B cell (primary cell): ENCODE measurements at regions of chr6 and their contacts with region 1.

Region 1: DNA sequence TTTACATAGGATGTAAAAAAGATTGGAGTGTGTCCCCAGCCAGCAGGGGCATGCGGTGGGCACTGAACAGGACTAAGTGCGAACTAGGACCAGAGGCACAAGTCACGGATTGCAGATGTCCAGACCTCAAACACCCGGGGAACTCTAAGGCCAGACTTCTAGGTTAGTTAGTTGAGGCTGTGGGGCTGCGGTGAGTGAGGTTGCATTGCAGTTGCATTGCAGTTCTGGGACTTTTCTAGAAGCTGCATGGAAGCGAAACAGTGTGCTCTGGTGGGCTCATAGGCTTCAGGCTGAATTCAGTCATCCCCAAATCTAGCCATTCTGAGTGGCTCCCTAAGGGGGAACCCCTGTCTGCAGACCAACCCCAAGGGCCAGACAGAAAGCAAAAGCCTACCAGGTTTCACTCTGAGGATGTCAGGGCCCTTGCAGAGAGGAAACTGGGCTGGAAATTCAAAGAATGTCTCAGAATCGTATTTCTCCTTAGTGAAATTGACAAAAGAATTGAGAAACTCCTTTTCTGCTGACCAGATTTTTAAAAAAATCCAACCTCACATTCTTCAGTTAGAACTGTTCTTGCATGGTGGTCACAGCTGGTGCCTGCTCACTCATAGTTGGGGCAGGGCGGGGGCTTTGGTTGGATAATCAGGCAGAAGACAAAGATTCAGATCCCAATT is 182.8 kb downstream of the ZDHHC14 start:
- DNase-seq: peak; percentile 68
- ATAC-seq: peak; percentile 31
- H3K4me3 ChIP-seq: no peak overlapping the region
- H3K4me3 Mint-ChIP-seq: peak overlapping the region; percentile 56
- H3K27ac ChIP-seq: peak overlapping the region; percentile 11 to 45
- H3K27ac Mint-ChIP-seq: peak overlapping the region; percentile 90
- H3K4me1 ChIP-seq: peaks cover 80 to 84% of the 10 kb centered on the region in 2 donors
- H3K4me1 Mint-ChIP-seq: peaks cover 72% of the 10 kb centered on the region
- H3K27me3 ChIP-seq: no peaks in the 10 kb centered on the region
- H3K27me3 Mint-ChIP-seq: no peaks in the 10 kb centered on the region
- CTCF ChIP-seq: no peak

Region 2: GRCh38 chr6:157269261-157269794 is 294.4 kb before region 1 on chr6:
- CTCF ChIA-PET with region 1: no interaction called
- POLR2A ChIA-PET with region 1: no interaction called
- intact Hi-C with region 1: no loop called
- DNase-seq: no peak
- ATAC-seq: no peak
- H3K4me3 ChIP-seq: no peak overlapping the region
- H3K4me3 Mint-ChIP-seq: no peak overlapping the region
- H3K27ac ChIP-seq: no peak overlapping the region
- H3K27ac Mint-ChIP-seq: no peak overlapping the region
- H3K4me1 ChIP-seq: peaks cover 6 to 12% of the 10 kb centered on the region in 2 donors
- H3K4me1 Mint-ChIP-seq: peaks cover 14% of the 10 kb centered on the region
- H3K27me3 ChIP-seq: no peaks in the 10 kb centered on the region
- H3K27me3 Mint-ChIP-seq: peaks cover 4% of the 10 kb centered on the region
- CTCF ChIP-seq: no peak

Region 3: DNA sequence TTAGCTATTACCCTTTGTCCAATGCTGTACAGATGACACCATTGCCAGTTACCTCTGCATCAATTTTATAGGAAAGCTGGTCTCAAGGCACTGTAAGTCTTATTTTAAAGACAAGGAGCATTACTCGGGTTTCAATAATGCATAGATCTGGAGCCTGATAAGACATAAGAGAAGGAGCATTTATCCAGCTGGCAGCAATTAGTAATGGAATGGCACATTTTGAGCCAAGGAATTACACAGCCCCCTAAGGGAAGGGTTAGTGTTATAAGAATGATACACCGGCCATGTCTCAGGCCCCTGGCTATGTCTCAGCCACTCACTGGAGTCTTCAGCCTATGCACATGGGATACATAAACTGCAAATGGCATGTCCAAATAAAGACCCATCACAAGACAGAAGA is 217.4 kb before region 1 on chr6:
- CTCF ChIA-PET with region 1: no interaction called
- POLR2A ChIA-PET with region 1: no interaction called
- intact Hi-C with region 1: no loop called
- DNase-seq: no peak
- ATAC-seq: no peak
- H3K4me3 ChIP-seq: no peak overlapping the region
- H3K4me3 Mint-ChIP-seq: no peak overlapping the region
- H3K27ac ChIP-seq: no peak overlapping the region
- H3K27ac Mint-ChIP-seq: no peak overlapping the region
- H3K4me1 ChIP-seq: no peaks in the 10 kb centered on the region
- H3K4me1 Mint-ChIP-seq: no peaks in the 10 kb centered on the region
- H3K27me3 ChIP-seq: peaks cover 0 to 33% (median 16%) of the 10 kb centered on the region in 4 experiments
- H3K27me3 Mint-ChIP-seq: peaks cover 57% of the 10 kb centered on the region
- CTCF ChIP-seq: no peak

Region 4: GRCh38 chr6:157368359-157369049 is 195.2 kb before region 1 on chr6:
- CTCF ChIA-PET with region 1: interaction called, 3 read pairs
- POLR2A ChIA-PET with region 1: interaction called, 5 read pairs
- intact Hi-C with region 1: loop called (anchors 1 kb)
- DNase-seq: peak; percentile 19
- ATAC-seq: peak; percentile 29
- H3K4me3 ChIP-seq: no peak overlapping the region
- H3K4me3 Mint-ChIP-seq: peak overlapping the region; percentile 26
- H3K27ac ChIP-seq: no peak overlapping the region
- H3K27ac Mint-ChIP-seq: peak overlapping the region; percentile 54
- H3K4me1 ChIP-seq: peaks cover 22 to 23% of the 10 kb centered on the region in 2 donors
- H3K4me1 Mint-ChIP-seq: peaks cover 18% of the 10 kb centered on the region
- H3K27me3 ChIP-seq: peaks cover 2 to 50% (median 41%) of the 10 kb centered on the region in 4 experiments
- H3K27me3 Mint-ChIP-seq: peaks cover 52% of the 10 kb centered on the region
- CTCF ChIP-seq: no peak

Region 5: DNA sequence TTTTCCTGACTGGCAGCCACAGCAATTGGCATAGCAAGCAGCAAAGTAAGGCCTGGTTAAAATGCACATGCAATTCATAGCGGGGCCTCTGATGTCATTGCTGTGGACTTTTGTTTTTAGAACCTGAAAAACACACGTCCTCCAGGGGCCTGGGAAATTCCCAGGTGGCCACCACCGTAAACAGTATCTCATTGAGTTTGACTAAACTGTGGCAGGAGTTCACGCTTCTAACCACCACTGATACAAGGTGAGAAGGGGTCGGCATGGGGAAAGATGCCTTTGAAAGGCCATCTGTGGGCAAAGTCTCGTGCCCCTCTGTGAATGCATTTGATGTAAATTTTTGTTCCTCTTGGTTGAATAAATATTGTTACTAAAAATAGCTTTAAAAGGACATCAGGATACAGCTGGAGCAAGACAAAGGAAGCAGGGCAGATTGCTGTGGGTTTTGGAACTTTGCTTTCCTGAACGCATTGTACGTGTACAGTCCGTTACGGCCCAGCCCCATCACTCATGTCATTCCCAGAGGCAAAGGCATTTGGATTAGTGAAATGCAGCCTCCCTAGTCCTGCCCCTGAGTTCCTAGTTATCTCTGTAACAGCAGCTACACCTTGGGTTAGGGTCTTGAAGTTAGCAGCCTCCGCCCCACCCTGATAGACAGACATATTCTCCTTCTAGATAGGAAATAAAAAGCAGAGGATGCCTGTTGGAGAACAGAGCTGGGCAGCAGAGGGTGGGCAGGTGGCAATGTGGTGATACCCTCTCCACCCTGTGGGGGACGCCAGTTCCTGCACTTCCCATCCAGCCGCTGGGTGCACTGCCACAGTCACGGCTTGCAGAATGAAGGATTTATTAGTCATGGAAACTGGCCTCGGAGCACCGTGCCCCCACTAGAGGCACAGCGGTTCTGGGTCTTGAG is 102.5 kb before region 1 on chr6:
- CTCF ChIA-PET with region 1: interaction called, 10 read pairs
- POLR2A ChIA-PET with region 1: interaction called, 31 read pairs
- intact Hi-C with region 1: loop called (anchors 1 kb)
- DNase-seq: peak; percentile 84
- ATAC-seq: peak; percentile 67
- H3K4me3 ChIP-seq: peak overlapping the region in 1 of 5 experiments; percentile 30
- H3K4me3 Mint-ChIP-seq: peak overlapping the region; percentile 71
- H3K27ac ChIP-seq: peak overlapping the region; percentile 36 to 53
- H3K27ac Mint-ChIP-seq: peak overlapping the region; percentile 94
- H3K4me1 ChIP-seq: peaks cover 60 to 77% of the 10 kb centered on the region in 2 donors
- H3K4me1 Mint-ChIP-seq: peaks cover 73% of the 10 kb centered on the region
- H3K27me3 ChIP-seq: no peaks in the 10 kb centered on the region
- H3K27me3 Mint-ChIP-seq: no peaks in the 10 kb centered on the region
- CTCF ChIP-seq: peak; percentile 31

Region 6: GRCh38 chr6:157550114-157550989 is 13.4 kb before region 1 on chr6:
- CTCF ChIA-PET with region 1: no interaction called
- POLR2A ChIA-PET with region 1: interaction called, 7 read pairs
- intact Hi-C with region 1: loop called (anchors 1 kb)
- DNase-seq: peak; percentile 58
- ATAC-seq: peak; percentile 53
- H3K4me3 ChIP-seq: peak overlapping the region in 1 of 5 experiments; percentile 10
- H3K4me3 Mint-ChIP-seq: peak overlapping the region; percentile 66
- H3K27ac ChIP-seq: peak overlapping the region; percentile 20
- H3K27ac Mint-ChIP-seq: peak overlapping the region; percentile 84
- H3K4me1 ChIP-seq: peaks cover 30 to 67% of the 10 kb centered on the region in 2 donors
- H3K4me1 Mint-ChIP-seq: peaks cover 47% of the 10 kb centered on the region
- H3K27me3 ChIP-seq: no peaks in the 10 kb centered on the region
- H3K27me3 Mint-ChIP-seq: peaks cover 3% of the 10 kb centered on the region
- CTCF ChIP-seq: no peak

Region 7: DNA sequence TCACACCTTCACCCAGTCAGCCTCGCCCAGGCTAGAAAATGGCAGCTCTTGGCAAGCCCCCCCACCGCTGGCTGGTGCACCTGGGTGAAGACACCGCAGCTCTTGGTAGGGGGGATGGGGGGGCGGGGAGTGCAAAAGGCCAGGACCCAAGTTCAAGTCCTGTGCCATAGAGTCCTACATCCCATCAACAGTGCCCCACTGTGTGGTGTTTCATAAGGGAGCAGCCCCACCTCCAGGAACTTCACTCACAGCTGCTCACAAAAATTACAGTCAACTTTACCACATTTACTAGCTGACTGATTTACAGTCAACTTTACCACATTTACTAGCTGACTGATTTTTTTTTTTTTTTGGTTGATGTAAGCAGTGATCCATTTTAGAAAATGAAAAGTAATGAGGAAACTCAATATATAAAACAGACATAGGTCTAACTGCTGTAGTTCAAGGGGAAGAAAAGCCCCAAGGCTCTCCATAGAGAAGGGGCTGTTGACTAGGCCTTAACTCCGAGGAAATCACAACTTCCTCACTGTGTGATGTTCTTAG is 50.3 kb after region 1 on chr6:
- CTCF ChIA-PET with region 1: interaction called, 6 read pairs
- POLR2A ChIA-PET with region 1: interaction called, 9 read pairs
- intact Hi-C with region 1: loop called (anchors 2 kb)
- DNase-seq: peak; percentile 65
- ATAC-seq: peak; percentile 64
- H3K4me3 ChIP-seq: no peak overlapping the region
- H3K4me3 Mint-ChIP-seq: peak overlapping the region; percentile 67
- H3K27ac ChIP-seq: peak overlapping the region; percentile 57 to 68
- H3K27ac Mint-ChIP-seq: peak overlapping the region; percentile 83
- H3K4me1 ChIP-seq: peaks cover 36 to 67% of the 10 kb centered on the region in 2 donors
- H3K4me1 Mint-ChIP-seq: peaks cover 59% of the 10 kb centered on the region
- H3K27me3 ChIP-seq: no peaks in the 10 kb centered on the region
- H3K27me3 Mint-ChIP-seq: no peaks in the 10 kb centered on the region
- CTCF ChIP-seq: no peak

Region 8: GRCh38 chr6:157632821-157633220 is 69.1 kb after region 1 on chr6:
- CTCF ChIA-PET with region 1: no interaction called
- POLR2A ChIA-PET with region 1: no interaction called
- intact Hi-C with region 1: no loop called
- DNase-seq: no peak
- ATAC-seq: no peak
- H3K4me3 ChIP-seq: no peak overlapping the region
- H3K4me3 Mint-ChIP-seq: no peak overlapping the region
- H3K27ac ChIP-seq: no peak overlapping the region
- H3K27ac Mint-ChIP-seq: no peak overlapping the region
- H3K4me1 ChIP-seq: peaks cover 11 to 12% of the 10 kb centered on the region in 2 donors
- H3K4me1 Mint-ChIP-seq: peaks cover 15% of the 10 kb centered on the region
- H3K27me3 ChIP-seq: no peaks in the 10 kb centered on the region
- H3K27me3 Mint-ChIP-seq: no peaks in the 10 kb centered on the region
- CTCF ChIP-seq: no peak

Region 9: GRCh38 chr6:158475344-158476302 is 911.9 kb after region 1 on chr6:
- CTCF ChIA-PET with region 1: no interaction called
- POLR2A ChIA-PET with region 1: no interaction called
- intact Hi-C with region 1: no loop called
- DNase-seq: peak; percentile 25
- ATAC-seq: peak; percentile 54
- H3K4me3 ChIP-seq: no peak overlapping the region
- H3K4me3 Mint-ChIP-seq: peak overlapping the region; percentile 46
- H3K27ac ChIP-seq: no peak overlapping the region
- H3K27ac Mint-ChIP-seq: peak overlapping the region; percentile 69
- H3K4me1 ChIP-seq: peaks cover 4 to 23% of the 10 kb centered on the region in 2 donors
- H3K4me1 Mint-ChIP-seq: peaks cover 36% of the 10 kb centered on the region
- H3K27me3 ChIP-seq: no peaks in the 10 kb centered on the region
- H3K27me3 Mint-ChIP-seq: no peaks in the 10 kb centered on the region
- CTCF ChIP-seq: no peak